ENCODE measurements at regions of chr2 and their contacts with region 1.

Region 1: DNA sequence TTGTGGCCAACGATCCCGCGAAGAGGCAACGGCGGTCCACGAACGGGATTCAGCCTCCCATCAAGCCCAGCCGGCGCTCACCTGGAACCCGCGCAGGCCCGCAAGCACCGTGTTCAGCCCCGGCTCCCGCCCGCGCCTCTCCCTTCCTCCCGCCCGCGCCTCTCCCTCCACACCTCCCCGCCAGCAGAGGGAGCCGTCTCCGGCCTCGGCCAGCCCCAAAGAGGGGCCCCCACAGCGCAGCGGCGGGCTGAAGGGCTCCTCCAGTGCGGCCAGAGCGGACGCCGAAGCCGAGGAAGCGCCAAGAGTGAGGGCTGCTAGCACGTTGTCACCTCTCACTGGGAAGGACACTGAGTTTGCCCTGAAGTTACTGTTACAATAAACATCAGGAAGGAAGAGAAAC is 55.3 kb upstream of the LAPTM4A start:
- DNase-seq: no peak
- ATAC-seq: no peak
- H3K4me3 ChIP-seq: no peak overlapping the region
- H3K27ac ChIP-seq: no peak overlapping the region
- H3K4me1 ChIP-seq: peaks cover 0 to 6% of the 10 kb centered on the region in 2 experiments; a peak in 4 of 5 replicates
- H3K27me3 ChIP-seq: peaks cover 3 to 16% of the 10 kb centered on the region in 2 experiments; a peak in 3 of 5 replicates
- CTCF ChIP-seq: no peak
- EP300 ChIP-seq: no peak
- POLR2A ChIP-seq: no peak
- RAD21 ChIP-seq: no peak

Region 2: DNA sequence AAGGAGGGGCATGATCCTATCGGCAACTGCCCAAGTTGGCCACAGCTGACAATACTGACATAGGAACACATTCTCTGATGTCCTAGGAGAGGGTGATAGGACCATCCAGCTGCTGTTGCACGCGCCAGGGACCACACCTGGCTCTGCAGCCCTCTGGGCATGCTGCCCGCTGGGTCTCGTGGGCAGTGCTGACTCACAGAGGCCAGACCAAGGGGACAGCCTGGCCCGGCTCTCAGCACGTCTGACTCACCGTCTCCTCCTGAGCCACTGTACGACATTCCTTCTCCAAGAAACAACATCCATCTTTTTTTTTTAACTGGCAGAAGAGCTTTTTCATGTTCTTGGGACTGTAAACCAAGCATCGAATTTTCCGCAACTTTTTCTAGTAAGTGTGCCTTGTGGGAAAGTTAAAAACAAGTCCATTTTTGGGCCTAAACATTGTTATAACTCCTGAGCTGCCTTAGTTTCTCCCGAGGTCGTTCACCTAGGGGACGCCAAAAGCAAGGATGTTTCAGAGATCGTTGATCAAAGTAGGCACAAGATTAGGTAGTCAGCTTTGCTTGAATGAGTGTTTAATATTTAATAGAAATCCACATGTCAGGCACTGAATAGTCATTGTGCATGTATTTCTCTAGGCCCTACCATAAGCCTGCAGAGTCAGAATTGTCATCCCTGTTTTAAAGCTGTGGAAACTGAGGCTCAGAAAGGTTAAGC is 305.2 kb before region 1 on chr2:
- CTCF ChIA-PET with region 1: no interaction called
- POLR2A ChIA-PET with region 1: no interaction called
- in situ Hi-C with region 1: no loop called
- intact Hi-C with region 1: no loop called
- DNase-seq: no peak
- ATAC-seq: no peak
- H3K4me3 ChIP-seq: no peak overlapping the region
- H3K27ac ChIP-seq: no peak overlapping the region
- H3K4me1 ChIP-seq: peaks cover 0 to 3% of the 10 kb centered on the region in 2 experiments; a peak in 1 of 5 replicates
- H3K27me3 ChIP-seq: peaks cover 2 to 70% of the 10 kb centered on the region in 2 experiments; a peak in 3 of 5 replicates
- CTCF ChIP-seq: no peak
- EP300 ChIP-seq: no peak
- POLR2A ChIP-seq: no peak
- RAD21 ChIP-seq: no peak

Region 3: DNA sequence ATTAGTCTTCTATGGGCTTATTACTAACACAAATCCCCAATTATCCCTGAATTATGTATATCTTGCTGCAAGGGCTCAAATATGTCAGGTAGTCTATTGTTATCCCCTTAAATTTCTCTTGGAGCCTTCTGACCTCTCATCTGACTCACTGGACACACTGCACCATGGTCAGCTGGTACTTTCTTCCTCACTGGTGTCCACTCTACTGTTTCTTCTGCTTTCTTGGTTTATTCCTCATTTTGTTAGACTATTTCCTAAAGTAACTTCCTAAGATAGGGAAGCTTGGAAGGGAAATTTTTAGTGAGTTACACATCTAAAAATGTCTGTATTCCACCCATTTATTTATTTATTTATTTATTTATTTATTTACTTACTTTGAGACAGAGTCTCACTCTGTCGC is 143.4 kb before region 1 on chr2:
- CTCF ChIA-PET with region 1: no interaction called
- POLR2A ChIA-PET with region 1: no interaction called
- in situ Hi-C with region 1: loop called (anchors 5 kb)
- intact Hi-C with region 1: no loop called
- DNase-seq: no peak
- ATAC-seq: no peak
- H3K4me3 ChIP-seq: no peak overlapping the region
- H3K27ac ChIP-seq: no peak overlapping the region
- H3K4me1 ChIP-seq: no peaks in the 10 kb centered on the region
- H3K27me3 ChIP-seq: no peaks in the 10 kb centered on the region
- CTCF ChIP-seq: no peak
- EP300 ChIP-seq: no peak
- POLR2A ChIP-seq: no peak
- RAD21 ChIP-seq: no peak

Region 4: GRCh38 chr2:20225294-20226151 is 118.8 kb after region 1 on chr2:
- CTCF ChIA-PET with region 1: no interaction called
- POLR2A ChIA-PET with region 1: no interaction called
- in situ Hi-C with region 1: no loop called
- intact Hi-C with region 1: loop called (anchors 1 kb)
- DNase-seq: peak; percentile 67 to 78 (median 76)
- ATAC-seq: peak; percentile 91
- H3K4me3 ChIP-seq: peak overlapping the region; percentile 47
- H3K27ac ChIP-seq: no peak overlapping the region
- H3K4me1 ChIP-seq: peaks cover 0 to 29% of the 10 kb centered on the region in 2 experiments; a peak in 2 of 5 replicates
- H3K27me3 ChIP-seq: peaks cover 15 to 59% of the 10 kb centered on the region in 2 experiments; a peak in 3 of 5 replicates
- CTCF ChIP-seq: peak; percentile 57 to 72 (median 66)
- EP300 ChIP-seq: no peak
- POLR2A ChIP-seq: no peak
- RAD21 ChIP-seq: peak; percentile 85 to 86

Region 5: DNA sequence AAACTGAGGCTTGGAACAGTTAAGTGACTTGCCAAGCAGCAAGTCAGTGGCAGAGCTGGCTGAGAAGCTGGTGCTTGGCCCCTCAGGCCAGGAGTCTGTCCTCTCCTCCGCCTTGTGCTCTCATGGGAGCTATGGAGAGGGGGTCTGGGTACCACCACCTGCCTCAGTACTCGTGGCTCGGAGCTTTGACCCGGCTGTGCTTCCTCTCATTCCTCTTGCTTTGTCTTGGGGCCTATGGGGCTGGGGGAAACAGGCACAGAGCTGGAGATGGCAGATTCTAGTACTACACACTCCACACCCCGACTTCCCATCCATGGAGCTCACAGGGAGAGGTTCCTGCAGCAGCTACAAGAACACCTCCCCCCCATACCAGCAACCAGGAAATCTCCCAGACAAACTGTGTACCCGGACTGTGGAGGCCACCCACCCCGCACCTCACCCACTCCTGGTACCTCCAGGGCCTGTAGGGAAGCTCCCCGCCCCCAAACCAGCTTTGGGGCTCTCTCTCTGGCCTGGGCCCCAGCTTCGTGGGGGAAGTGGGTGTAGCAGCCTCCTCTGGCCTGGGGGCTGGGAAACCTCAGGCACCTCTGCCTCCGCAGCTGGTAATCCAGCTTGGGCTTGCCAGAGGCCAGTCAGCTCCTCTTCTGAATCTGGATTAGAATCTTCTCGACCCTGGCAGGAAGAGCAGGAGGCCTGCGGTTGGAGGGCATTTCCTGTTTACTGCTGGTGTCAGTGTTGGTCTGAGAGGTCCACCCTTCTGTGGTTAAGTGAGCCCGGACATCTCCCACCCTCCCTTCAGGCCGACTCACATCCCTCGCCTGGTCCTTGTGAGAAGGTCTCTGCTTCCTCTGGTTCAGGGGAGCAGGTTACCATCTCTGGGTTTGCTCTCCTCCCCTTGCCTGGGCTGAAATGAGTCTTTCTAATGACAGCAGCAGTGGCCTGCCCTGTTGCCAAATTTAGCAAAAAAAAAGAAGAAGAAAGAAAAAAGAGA is 317.8 kb after region 1 on chr2:
- CTCF ChIA-PET with region 1: no interaction called
- POLR2A ChIA-PET with region 1: no interaction called
- in situ Hi-C with region 1: no loop called
- intact Hi-C with region 1: loop called (anchors 10 kb)
- DNase-seq: peak in 2 of 4 experiments; percentile 41 to 57
- ATAC-seq: peak; percentile 76
- H3K4me3 ChIP-seq: no peak overlapping the region
- H3K27ac ChIP-seq: 0 out of 3 replicates have a peak overlapping the region, but pooled peaks have one; percentile 25
- H3K4me1 ChIP-seq: peaks cover 6 to 14% of the 10 kb centered on the region in 2 experiments
- H3K27me3 ChIP-seq: peaks cover 0 to 18% of the 10 kb centered on the region in 2 experiments; a peak in 2 of 5 replicates
- CTCF ChIP-seq: no peak
- EP300 ChIP-seq: peak; percentile 66
- POLR2A ChIP-seq: no peak
- RAD21 ChIP-seq: peak in 1 of 2 experiments; percentile 16; a peak in 1 of 4 replicates

Measured in K562 (cell line).